ENCODE measurements at regions of chr7 and their contacts with region 1.

Region 1: DNA sequence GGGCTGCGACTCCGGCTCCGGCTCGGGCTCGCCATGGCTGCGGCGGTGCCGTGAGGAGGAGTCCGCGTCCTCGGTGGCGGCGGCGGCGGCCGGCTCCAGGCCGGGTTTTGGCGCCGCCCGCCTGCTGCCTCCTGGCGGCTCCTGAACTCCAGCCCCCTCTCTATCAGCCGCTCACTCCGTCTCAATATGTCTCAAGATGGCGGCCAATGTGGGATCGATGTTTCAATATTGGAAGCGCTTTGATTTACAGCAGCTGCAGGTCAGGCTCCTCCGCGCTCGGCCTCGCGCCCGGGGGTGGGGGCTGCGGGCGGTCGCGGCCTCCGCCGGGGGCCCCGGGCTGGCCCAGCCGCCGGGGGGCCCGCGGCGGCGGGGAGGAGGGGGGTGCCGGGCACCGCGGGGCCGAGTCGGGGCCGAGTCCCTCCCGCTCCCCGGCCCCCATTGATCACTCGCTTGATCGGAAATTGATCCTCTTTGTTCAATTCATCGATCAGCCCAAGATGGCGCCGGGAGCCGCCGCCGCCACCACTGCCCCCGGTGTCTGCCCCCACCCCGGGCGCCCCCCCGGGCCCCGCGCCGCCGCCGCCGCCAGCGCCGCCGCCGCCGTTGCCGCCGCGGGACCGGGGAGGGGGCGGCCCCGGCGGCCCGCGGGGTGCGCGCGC is 1.5 kb upstream of the CUX1 start:
- DNase-seq: peak; percentile 87
- ATAC-seq: peak; percentile 82

Region 2: GRCh38 chr7:101602484-101603241 is 213.3 kb before region 1 on chr7:
- intact Hi-C with region 1: loop called (anchors 5 kb)
- DNase-seq: peak; percentile 86
- ATAC-seq: peak; percentile 78

Region 3: GRCh38 chr7:101743241-101743994 is 72.5 kb before region 1 on chr7:
- intact Hi-C with region 1: loop called (anchors 2 kb)
- DNase-seq: peak; percentile 80
- ATAC-seq: peak; percentile 61

Region 4: DNA sequence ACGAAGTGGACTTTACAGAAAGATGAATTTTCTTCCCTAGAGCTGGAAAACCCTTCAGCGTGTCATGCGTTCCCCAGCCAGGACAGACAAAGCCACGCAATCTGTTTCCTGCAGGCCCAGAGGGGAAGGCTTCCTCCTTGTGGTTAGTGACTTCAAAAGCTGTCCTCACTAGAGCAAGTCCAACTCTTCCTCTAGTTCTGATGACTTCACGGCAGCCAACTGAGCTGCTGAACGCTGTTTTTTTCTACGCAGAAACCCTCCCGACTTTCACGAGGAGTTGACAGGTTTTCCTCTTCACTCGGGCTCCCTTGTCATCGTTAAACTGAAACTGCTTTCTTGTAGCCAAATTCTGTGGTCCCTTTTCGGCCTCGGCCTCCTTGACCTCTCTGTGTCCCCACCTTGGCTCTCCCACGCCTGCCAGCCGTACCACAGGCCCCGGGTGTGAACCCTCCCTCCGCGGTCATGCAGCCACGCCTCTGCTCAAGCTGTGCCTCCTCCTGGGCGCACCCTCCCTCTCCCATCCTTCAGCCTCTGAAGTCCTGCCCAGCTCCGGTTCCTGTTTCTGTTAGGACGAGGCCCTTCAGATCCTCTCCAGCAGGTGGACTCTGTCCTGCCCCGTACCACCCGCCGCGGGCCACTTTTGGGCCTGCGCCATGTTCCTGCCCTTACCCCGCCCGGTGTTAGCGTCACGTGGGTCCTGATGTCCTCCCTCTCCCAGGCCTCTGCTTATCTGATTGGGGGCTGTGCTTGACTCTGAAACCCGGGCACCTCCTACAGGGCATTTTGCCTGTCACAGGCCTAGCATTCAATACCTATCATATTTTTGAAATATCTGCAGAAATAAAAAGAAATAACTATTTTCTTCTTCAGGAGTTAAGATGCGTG is 40.8 kb after region 1 on chr7:
- intact Hi-C with region 1: loop called (anchors 5 kb)
- DNase-seq: peak; percentile 97
- ATAC-seq: peak; percentile 91

Region 5: DNA sequence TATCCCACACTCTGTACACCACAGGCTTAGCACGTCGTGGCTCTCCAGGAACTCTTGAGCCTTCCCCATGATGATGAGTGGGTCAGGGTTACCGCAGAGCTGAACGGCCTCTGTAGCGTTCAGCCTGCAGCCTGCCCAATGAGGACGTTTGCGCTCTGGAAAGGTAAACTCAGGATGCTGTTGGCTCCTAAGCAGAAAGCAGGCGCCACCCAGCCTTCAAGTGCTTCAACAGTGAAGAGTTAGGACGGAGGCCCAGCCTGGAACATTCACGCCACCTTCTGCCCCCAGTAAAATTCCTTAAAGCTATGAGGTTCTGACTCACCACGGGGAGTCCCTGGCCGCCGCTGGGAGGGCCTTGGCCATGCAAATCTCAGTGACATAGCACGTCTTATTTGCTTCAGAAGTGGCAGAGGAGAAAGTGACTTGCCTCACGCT is 309.2 kb after region 1 on chr7:
- intact Hi-C with region 1: loop called (anchors 10 kb)
- DNase-seq: no peak
- ATAC-seq: peak; percentile 90

Region 6: GRCh38 chr7:102236592-102237287 is 420.8 kb after region 1 on chr7:
- intact Hi-C with region 1: loop called (anchors 5 kb)
- DNase-seq: no peak
- ATAC-seq: peak; percentile 78